Astrocyte of the cerebellum (primary cell): ENCODE measurements at regions of chr4 and their contacts with region 1.

Region 1: GRCh38 chr4:137998666-137999429 is 243.3 kb downstream of the SLC7A11 start:
- DNase-seq: peak; percentile 74
- H3K4me3 ChIP-seq: no peak overlapping the region
- CTCF ChIP-seq: no peak

Region 2: GRCh38 chr4:137934911-137935310 is 63.9 kb before region 1 on chr4:
- in situ Hi-C with region 1: loop called (anchors 5 kb)
- DNase-seq: no peak
- H3K4me3 ChIP-seq: no peak overlapping the region
- CTCF ChIP-seq: no peak

Region 3: GRCh38 chr4:137961051-137961438 is 37.8 kb before region 1 on chr4:
- in situ Hi-C with region 1: no loop called
- DNase-seq: no peak
- H3K4me3 ChIP-seq: no peak overlapping the region
- CTCF ChIP-seq: no peak

Region 4: DNA sequence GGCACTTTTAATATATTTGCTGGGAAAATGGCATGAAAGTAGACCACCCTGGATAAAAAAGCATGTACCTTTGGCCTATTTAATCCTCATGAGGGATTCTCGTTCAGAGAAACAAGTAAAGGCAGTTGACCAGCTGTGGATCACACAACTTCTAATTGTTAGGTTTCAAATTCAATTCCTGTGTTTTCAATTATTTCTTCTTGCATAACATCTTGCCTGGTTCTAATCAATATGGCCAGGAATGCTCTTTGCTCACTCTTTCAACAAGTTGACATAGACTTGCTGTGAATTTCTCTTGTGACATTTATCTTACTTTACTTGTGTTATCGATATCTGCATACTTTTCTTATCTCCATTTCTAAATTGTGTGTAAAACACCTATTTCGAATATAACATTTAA is 31.5 kb after region 1 on chr4:
- in situ Hi-C with region 1: no loop called
- DNase-seq: no peak
- H3K4me3 ChIP-seq: no peak overlapping the region
- CTCF ChIP-seq: no peak

Region 5: GRCh38 chr4:138062929-138063328 is 64.1 kb after region 1 on chr4:
- in situ Hi-C with region 1: no loop called
- DNase-seq: no peak
- H3K4me3 ChIP-seq: no peak overlapping the region
- CTCF ChIP-seq: peak; percentile 21